T-cell (primary cell): ENCODE measurements at regions of chr3 and their contacts with region 1.

Region 1: GRCh38 chr3:39177708-39178332 is 14.6 kb downstream of the XIRP1 start:
- DNase-seq: peak in 32 of 35 experiments; percentile 8 to 68 (median 36)
- ATAC-seq: peak; percentile 21 to 28 (median 25)
- H3K4me3 ChIP-seq: peak overlapping the region; percentile 44 to 52
- H3K4me3 Mint-ChIP-seq: peak overlapping the region; percentile 70 to 88 (median 74)
- H3K27ac ChIP-seq: peak overlapping the region; percentile 64
- H3K27ac Mint-ChIP-seq: peak overlapping the region; percentile 82 to 89
- H3K4me1 ChIP-seq: peaks cover 20 to 38% of the 10 kb centered on the region in 2 experiments
- H3K4me1 Mint-ChIP-seq: peaks cover 33 to 43% (median 37%) of the 10 kb centered on the region in 3 donors
- H3K27me3 ChIP-seq: no peaks in the 10 kb centered on the region
- H3K27me3 Mint-ChIP-seq: no peaks in the 10 kb centered on the region

Region 2: GRCh38 chr3:39147711-39148434 is 29.9 kb before region 1 on chr3:
- CTCF ChIA-PET with region 1: interaction called in 1 of 2 experiments, 4 read pairs
- POLR2A ChIA-PET with region 1: interaction called, 4 to 19 read pairs
- DNase-seq: peak in 10 of 35 experiments; percentile 18 to 57 (median 38)
- ATAC-seq: peak in 3 of 4 experiments; percentile 17 to 35 (median 21)
- H3K4me3 ChIP-seq: peak overlapping the region; percentile 33 to 34
- H3K4me3 Mint-ChIP-seq: peak overlapping the region; percentile 74 to 93 (median 89)
- H3K27ac ChIP-seq: peak overlapping the region; percentile 84
- H3K27ac Mint-ChIP-seq: peak overlapping the region; percentile 96 to 97
- H3K4me1 ChIP-seq: peaks cover 48 to 73% of the 10 kb centered on the region in 2 experiments
- H3K4me1 Mint-ChIP-seq: peaks cover 73 to 78% (median 74%) of the 10 kb centered on the region in 3 donors
- H3K27me3 ChIP-seq: no peaks in the 10 kb centered on the region
- H3K27me3 Mint-ChIP-seq: no peaks in the 10 kb centered on the region

Region 3: GRCh38 chr3:39406368-39407258 is 228.8 kb after region 1 on chr3 and contains the start of gene RPSA:
- CTCF ChIA-PET with region 1: no interaction called
- POLR2A ChIA-PET with region 1: no interaction called
- DNase-seq: peak; percentile 86 to 99 (median 96)
- ATAC-seq: peak; percentile 93 to 94 (median 94)
- H3K4me3 ChIP-seq: peak within 1 kb of the TSS; percentile 72 to 74
- H3K4me3 Mint-ChIP-seq: peak within 1 kb of the TSS; percentile 89 to 90 (median 90)
- H3K27ac ChIP-seq: peak within 1 kb of the TSS; percentile 68
- H3K27ac Mint-ChIP-seq: peak within 1 kb of the TSS; percentile 93 to 95
- H3K4me1 ChIP-seq: peaks cover 16 to 36% of the 10 kb centered on the region in 2 experiments
- H3K4me1 Mint-ChIP-seq: peaks cover 49 to 58% (median 51%) of the 10 kb centered on the region in 3 donors
- H3K27me3 ChIP-seq: no peaks in the 10 kb centered on the region
- H3K27me3 Mint-ChIP-seq: no peaks in the 10 kb centered on the region
- total RNA-seq, gene RPSA: 1,722 to 2,107 (median 1,965) TPM

Region 4: DNA sequence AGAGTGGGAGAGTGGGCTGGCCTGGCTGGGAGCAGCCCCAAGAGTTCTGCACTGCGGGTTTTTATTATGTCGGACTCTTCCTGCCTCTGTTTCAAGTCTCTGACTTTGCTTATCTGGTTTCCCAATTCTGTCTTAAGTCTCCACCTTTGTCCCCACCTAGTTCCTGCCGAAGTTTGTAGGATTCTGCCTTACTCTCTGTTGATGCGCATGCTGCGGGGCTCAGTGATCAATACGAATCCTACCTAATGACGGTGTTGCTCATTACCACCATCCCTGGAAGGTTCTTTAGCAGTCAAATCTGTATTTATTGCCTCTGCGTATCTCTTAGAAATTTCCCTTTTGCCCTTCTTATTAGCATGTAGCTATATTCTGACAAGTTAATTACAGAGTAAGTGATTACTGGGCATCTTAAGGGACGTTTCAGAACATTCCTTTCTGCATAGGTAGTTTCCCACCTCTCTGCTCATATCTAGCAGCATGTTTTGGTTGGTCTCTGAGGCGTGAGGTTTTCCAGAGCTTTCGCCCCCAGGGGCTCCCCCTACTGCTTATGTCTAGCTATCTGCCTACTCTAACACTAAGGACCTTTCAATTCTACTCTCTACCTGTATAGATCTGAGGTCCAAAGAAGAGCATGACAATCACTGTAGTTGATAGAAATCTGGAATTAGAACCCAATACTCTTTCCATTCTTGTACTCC is 895.6 kb after region 1 on chr3:
- CTCF ChIA-PET with region 1: no interaction called
- POLR2A ChIA-PET with region 1: no interaction called
- DNase-seq: no peak
- ATAC-seq: no peak
- H3K4me3 ChIP-seq: no peak overlapping the region
- H3K4me3 Mint-ChIP-seq: no peak overlapping the region
- H3K27ac ChIP-seq: no peak overlapping the region
- H3K27ac Mint-ChIP-seq: no peak overlapping the region
- H3K4me1 ChIP-seq: no peaks in the 10 kb centered on the region
- H3K4me1 Mint-ChIP-seq: no peaks in the 10 kb centered on the region
- H3K27me3 ChIP-seq: peaks cover 0 to 3% of the 10 kb centered on the region in 2 experiments
- H3K27me3 Mint-ChIP-seq: peaks cover 4 to 15% of the 10 kb centered on the region in 2 donors